Caco-2 (cell line): ENCODE measurements at regions of chr3 and their contacts with region 1.

Region 1: DNA sequence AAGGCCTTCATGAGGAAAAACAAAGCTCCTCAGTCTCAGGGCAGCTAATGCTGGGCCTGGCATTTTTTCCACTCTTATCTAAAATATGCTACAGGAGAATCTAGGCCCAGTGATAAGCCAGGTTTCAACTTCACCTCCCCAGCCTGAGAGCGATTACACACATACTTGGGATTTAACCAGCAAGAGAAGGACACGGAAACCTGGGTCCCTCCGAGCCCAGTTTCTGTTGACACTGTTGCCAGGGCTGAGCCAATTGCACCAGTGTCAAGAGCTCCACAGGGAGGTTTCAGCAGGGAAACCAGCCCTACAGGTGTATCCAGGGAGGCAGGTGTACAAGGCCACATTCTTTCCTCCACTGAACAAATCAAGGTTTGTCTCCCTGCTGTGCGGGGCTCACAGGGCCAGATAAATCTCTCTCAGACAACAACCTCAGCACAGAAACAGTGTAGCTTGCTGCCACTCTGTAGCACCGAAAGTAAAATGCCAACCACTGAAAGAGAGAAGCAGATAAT is 85.4 kb downstream of the MAGI1 start:
- DNase-seq: peak; percentile 96 to 98
- H3K4me3 ChIP-seq: no peak overlapping the region
- H3K4me3 Mint-ChIP-seq: peak overlapping the region; percentile 71
- H3K27ac Mint-ChIP-seq: peak overlapping the region; percentile 100
- H3K4me1 ChIP-seq: peaks cover 89% of the 10 kb centered on the region
- H3K4me1 Mint-ChIP-seq: peaks cover 51% of the 10 kb centered on the region
- H3K27me3 ChIP-seq: no peaks in the 10 kb centered on the region
- H3K27me3 Mint-ChIP-seq: no peaks in the 10 kb centered on the region
- CTCF ChIP-seq: peak in 1 of 2 experiments; percentile 4

Region 2: DNA sequence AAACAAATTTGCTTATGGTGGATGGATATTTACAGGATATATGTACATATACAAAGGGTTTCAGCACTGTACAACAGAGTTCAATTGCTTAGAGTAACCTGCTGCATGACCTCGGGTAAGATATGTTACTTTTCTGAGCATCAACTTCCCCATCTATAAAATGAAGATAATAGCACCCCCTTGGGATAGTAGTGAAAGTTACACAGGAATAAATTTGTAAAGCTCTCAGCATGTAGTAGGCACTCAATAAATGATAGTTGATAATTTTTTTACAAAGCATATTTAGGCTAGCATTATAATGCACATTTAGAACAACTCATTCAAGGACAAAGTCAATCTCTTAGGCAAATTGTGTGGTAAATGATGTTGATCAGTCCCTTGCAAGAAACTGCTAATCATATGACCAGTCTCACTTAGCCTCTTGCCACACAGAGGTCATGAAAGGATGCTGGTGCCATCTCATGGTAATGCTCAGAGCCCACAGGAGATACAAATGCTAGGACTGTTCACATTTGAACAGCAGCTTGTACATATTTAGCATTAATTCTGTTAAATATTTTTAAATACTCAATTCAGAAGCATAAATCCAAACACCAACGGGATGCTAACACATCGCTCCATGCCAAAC is 38.5 kb before region 1 on chr3:
- CTCF ChIA-PET with region 1: no interaction called
- POLR2A ChIA-PET with region 1: no interaction called
- intact Hi-C with region 1: loop called (anchors 1 kb)
- DNase-seq: no peak
- H3K4me3 ChIP-seq: no peak overlapping the region
- H3K4me3 Mint-ChIP-seq: no peak overlapping the region
- H3K27ac Mint-ChIP-seq: no peak overlapping the region
- H3K4me1 ChIP-seq: no peaks in the 10 kb centered on the region; the same call in 1 of the 2 replicates
- H3K4me1 Mint-ChIP-seq: peaks cover 8% of the 10 kb centered on the region
- H3K27me3 ChIP-seq: no peaks in the 10 kb centered on the region
- H3K27me3 Mint-ChIP-seq: no peaks in the 10 kb centered on the region
- CTCF ChIP-seq: peak in 1 of 2 experiments; percentile 5

Region 3: DNA sequence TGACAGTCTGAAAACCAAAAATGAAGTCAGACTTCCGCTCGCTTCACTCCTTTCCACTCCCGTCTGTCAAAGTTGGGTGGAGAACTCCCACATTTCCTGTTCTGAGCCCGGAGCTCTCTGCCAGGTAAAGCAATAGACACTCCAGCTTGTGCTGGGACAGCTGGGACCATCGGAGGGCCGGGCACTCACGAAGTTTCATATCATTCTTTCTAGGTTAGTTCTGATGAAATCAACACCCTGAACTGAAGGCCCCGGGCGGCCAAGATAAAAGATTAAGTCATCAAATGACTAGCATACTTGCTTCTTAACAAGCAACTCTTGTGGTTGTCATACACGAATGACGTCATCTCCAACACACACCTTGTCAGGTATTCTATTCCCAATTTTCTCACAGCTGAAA is 43.2 kb after region 1 on chr3:
- CTCF ChIA-PET with region 1: interaction called, 3 read pairs
- POLR2A ChIA-PET with region 1: interaction called, 5 read pairs
- intact Hi-C with region 1: loop called (anchors 2 kb)
- DNase-seq: peak; percentile 70 to 79
- H3K4me3 ChIP-seq: no peak overlapping the region
- H3K4me3 Mint-ChIP-seq: peak overlapping the region; percentile 56
- H3K27ac Mint-ChIP-seq: peak overlapping the region; percentile 82
- H3K4me1 ChIP-seq: peaks cover 30% of the 10 kb centered on the region
- H3K4me1 Mint-ChIP-seq: peaks cover 47% of the 10 kb centered on the region
- H3K27me3 ChIP-seq: no peaks in the 10 kb centered on the region
- H3K27me3 Mint-ChIP-seq: no peaks in the 10 kb centered on the region
- CTCF ChIP-seq: no peak

Region 4: DNA sequence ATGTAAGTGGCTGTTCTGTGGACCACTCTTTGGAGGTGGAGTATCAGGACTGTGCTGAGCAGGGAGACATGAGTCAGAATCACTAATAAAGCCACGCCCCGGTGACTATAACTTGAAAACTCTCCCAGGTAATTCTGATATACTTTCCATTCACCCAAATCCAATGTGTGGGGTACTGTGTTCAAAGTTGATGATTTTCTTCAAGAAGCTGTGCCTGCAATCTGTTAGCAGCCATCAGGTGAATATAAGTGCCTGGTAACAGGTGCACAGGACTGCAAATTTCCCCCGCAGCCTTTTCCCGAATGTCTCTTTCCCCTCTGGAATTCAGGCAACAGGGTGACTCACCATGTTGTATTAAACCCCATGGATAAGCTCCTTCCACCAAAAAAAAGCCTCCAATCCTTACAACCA is 68.4 kb after region 1 on chr3:
- CTCF ChIA-PET with region 1: no interaction called
- POLR2A ChIA-PET with region 1: no interaction called
- intact Hi-C with region 1: no loop called
- DNase-seq: no peak
- H3K4me3 ChIP-seq: no peak overlapping the region
- H3K4me3 Mint-ChIP-seq: no peak overlapping the region
- H3K27ac Mint-ChIP-seq: peak overlapping the region; percentile 67
- H3K4me1 ChIP-seq: peaks cover 39% of the 10 kb centered on the region
- H3K4me1 Mint-ChIP-seq: peaks cover 34% of the 10 kb centered on the region
- H3K27me3 ChIP-seq: no peaks in the 10 kb centered on the region
- H3K27me3 Mint-ChIP-seq: no peaks in the 10 kb centered on the region
- CTCF ChIP-seq: no peak

Region 5: GRCh38 chr3:66138336-66139313 is 185.3 kb after region 1 on chr3:
- CTCF ChIA-PET with region 1: no interaction called
- POLR2A ChIA-PET with region 1: no interaction called
- intact Hi-C with region 1: loop called (anchors 10 kb)
- DNase-seq: peak; percentile 55 to 69
- H3K4me3 ChIP-seq: no peak overlapping the region
- H3K4me3 Mint-ChIP-seq: no peak overlapping the region
- H3K27ac Mint-ChIP-seq: no peak overlapping the region
- H3K4me1 ChIP-seq: peaks cover 9% of the 10 kb centered on the region
- H3K4me1 Mint-ChIP-seq: peaks cover 15% of the 10 kb centered on the region
- H3K27me3 ChIP-seq: no peaks in the 10 kb centered on the region
- H3K27me3 Mint-ChIP-seq: no peaks in the 10 kb centered on the region
- CTCF ChIP-seq: peak; percentile 56 to 70